Breast epithelium (tissue), 4 donors: ENCODE measurements at regions of chr4 and their contacts with region 1.

Region 1: DNA sequence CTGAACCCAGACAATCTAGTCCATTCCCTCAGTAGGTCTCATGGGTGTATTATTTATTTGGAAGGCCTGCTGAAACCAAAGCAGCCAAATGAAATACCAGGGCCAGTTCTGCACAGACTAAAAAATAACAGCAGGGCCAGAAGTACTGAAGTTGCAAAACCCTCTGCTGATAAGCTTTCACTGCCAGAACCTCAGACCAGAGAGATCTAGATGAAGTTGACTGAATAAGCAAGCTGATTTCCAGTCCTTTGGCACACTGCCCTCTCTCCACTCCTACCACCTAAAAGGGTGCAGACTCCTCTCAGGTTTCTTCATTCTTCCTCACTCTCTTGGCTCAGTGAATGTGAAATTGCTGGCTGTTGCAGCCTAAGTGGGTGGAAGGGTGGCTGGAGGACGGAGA is 276.7 kb upstream of the KLF3 start:
- DNase-seq: peak in 1 of 2 donors; percentile 22
- H3K4me3 ChIP-seq: no peak overlapping the region
- H3K27ac ChIP-seq: no peak overlapping the region
- H3K4me1 ChIP-seq: peaks cover 0 to 20% of the 10 kb centered on the region in 2 donors
- H3K27me3 ChIP-seq: no peaks in the 10 kb centered on the region
- CTCF ChIP-seq: no peak
- POLR2A ChIP-seq: no peak

Region 2: DNA sequence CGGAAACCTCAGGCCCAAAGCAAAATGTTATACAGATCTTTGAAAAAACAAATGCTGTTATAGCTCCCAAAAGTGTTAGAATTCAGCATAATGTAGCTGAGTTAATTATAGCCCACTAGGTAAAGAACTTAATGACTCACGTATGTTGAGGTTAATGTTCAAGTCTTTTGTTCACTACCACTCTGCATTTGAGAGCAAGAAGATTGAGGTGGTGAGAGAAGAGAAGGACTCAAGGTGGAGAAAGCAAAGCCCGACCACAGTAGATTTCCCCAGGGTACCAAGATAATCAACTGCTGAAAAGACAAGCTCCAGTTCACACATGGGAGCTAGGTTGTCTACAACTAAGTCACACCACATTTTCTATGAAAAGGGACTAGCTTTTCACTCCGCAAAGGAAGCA is 1625.7 kb before region 1 on chr4:
- intact Hi-C with region 1: loop called (anchors 10 kb)
- DNase-seq: no peak
- H3K4me3 ChIP-seq: no peak overlapping the region
- H3K27ac ChIP-seq: no peak overlapping the region
- H3K4me1 ChIP-seq: no peaks in the 10 kb centered on the region
- H3K27me3 ChIP-seq: no peaks in the 10 kb centered on the region
- CTCF ChIP-seq: no peak
- POLR2A ChIP-seq: no peak

Region 3: DNA sequence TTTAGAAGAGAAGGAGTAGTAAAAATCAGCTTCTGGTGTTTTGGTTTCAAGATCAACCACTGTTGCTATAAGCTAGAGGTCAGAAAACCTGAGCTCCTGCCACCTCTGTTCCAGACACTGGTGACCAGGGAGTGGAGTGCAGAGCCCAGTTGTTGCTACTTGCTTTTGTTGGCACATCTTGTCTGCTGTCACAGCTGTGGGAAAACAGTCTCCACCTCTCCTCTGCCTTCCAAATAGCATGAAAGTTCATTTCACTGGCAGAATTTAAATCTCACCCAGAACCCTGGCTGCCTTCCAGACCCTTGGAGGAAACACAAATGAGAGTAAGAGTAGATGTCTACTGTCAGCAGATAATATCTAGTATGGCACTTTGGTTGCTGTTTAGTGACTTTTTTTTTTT is 20.9 kb before region 1 on chr4:
- intact Hi-C with region 1: no loop called
- DNase-seq: no peak
- H3K4me3 ChIP-seq: no peak overlapping the region
- H3K27ac ChIP-seq: no peak overlapping the region
- H3K4me1 ChIP-seq: no peaks in the 10 kb centered on the region
- H3K27me3 ChIP-seq: no peaks in the 10 kb centered on the region
- CTCF ChIP-seq: no peak
- POLR2A ChIP-seq: no peak

Region 4: DNA sequence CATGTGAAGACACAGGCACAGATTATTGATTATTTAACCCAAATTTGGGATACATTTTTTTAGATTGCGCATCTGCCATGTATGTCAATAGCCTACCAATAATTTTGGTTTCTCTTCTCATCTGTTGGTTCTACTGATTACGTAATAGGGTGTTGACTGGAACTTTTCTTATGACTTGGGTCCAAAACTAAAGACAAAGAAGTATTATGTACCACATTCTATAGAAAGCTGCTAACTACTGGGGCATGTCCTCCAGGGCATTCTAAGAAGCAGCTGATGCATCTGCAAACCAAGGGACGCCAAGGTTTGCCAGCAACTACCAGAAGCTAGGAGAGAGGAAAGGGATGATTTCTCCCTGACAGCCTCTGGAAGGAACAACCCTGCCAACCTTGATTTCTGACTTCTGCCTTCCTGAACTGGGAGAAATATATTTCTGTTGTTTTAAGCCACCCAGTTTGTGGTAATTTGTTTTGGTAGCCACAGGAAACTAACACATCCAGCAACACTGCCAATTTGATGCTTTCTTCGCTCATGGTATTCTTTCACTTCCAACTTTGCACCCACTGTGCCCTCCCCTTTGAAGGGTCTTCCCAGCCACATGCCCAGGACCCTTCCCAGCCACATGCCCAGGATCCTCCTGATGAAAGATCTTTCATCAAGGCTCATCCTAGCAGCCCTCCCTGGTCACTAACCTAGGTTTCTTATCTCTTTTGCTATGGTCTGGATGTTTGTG is 433.1 kb after region 1 on chr4:
- intact Hi-C with region 1: loop called (anchors 5 kb)
- DNase-seq: no peak
- H3K4me3 ChIP-seq: no peak overlapping the region
- H3K27ac ChIP-seq: peak overlapping the region; percentile 15 to 79
- H3K4me1 ChIP-seq: no peaks in the 10 kb centered on the region
- H3K27me3 ChIP-seq: no peaks in the 10 kb centered on the region
- CTCF ChIP-seq: no peak
- POLR2A ChIP-seq: no peak